ENCODE measurements at regions of chr4 and their contacts with region 1.

Region 1: GRCh38 chr4:185425647-185426352 is at the start of gene UFSP2:
- DNase-seq: peak; percentile 89
- H3K4me3 ChIP-seq: peak within 1 kb of the TSS; percentile 63 to 88 (median 77)
- H3K27ac ChIP-seq: peak within 1 kb of the TSS; percentile 100
- H3K4me1 ChIP-seq: no peaks in the 10 kb centered on the region
- H3K27me3 ChIP-seq: no peaks in the 10 kb centered on the region
- CTCF ChIP-seq: no peak
- total RNA-seq, gene UFSP2: 24.7 to 30.0 TPM

Region 2: DNA sequence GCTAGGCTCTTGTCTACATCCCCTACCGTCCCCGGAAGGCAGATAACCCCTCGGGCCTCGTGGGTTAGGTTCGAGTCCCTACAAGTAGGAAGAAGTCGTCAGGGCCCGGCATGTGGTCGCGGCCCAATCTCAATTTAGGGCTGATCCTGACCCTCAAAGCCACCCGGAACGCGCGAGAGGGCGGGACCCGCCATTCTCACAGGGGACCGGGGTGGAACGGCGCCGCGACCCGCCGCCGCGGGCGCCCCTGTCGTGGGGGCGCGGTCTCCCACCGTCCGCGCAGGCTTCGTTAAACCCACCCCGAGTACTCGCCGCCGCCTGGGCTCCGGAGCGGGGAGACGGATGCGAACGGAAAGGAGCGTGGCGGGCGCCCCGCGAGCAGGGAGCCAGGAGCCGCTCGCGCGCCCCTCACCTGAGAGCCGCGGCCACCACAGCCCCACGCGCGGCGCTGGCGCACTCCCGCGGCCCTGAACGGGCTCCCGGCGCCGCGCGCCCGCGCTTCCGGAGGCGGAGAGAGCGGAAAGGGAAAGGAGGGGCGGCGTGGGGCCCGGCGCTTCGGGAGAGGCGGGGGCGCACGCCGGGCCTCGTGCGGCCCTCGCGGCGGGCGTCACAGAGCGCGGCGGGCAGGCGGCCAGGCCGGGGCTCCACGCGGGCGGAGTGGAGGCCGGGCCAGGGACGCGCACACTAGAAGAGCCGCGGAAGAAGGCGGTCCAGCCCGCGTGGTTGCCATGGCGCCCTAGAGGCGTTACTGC is 222.1 kb before region 1 on chr4 and contains the start of gene CFAP97:
- CTCF ChIA-PET with region 1: no interaction called
- dilution Hi-C with region 1: no loop called
- in situ Hi-C with region 1: no loop called
- intact Hi-C with region 1: loop called (anchors 10 kb)
- DNase-seq: peak; percentile 77
- H3K4me3 ChIP-seq: peak within 1 kb of the TSS; percentile 68 to 92 (median 79)
- H3K27ac ChIP-seq: peak within 1 kb of the TSS; percentile 85
- H3K4me1 ChIP-seq: peaks cover 13% of the 10 kb centered on the region
- H3K27me3 ChIP-seq: no peaks in the 10 kb centered on the region
- CTCF ChIP-seq: no peak
- total RNA-seq, gene CFAP97: 39.7 to 45.2 TPM

Region 3: GRCh38 chr4:185471235-185472102 is 45.7 kb after region 1 on chr4 and contains the start of gene CCDC110:
- CTCF ChIA-PET with region 1: no interaction called
- dilution Hi-C with region 1: no loop called
- in situ Hi-C with region 1: no loop called
- intact Hi-C with region 1: loop called (anchors 2 kb)
- DNase-seq: peak; percentile 81
- H3K4me3 ChIP-seq: peak within 1 kb of the TSS; percentile 71 to 86 (median 82)
- H3K27ac ChIP-seq: no peak within 1 kb of the TSS
- H3K4me1 ChIP-seq: peaks cover 10% of the 10 kb centered on the region
- H3K27me3 ChIP-seq: peaks cover 5% of the 10 kb centered on the region
- CTCF ChIP-seq: peak in 1 of 2 donors; percentile 46
- total RNA-seq, gene CCDC110: 0.17 to 0.59 TPM

Region 4: DNA sequence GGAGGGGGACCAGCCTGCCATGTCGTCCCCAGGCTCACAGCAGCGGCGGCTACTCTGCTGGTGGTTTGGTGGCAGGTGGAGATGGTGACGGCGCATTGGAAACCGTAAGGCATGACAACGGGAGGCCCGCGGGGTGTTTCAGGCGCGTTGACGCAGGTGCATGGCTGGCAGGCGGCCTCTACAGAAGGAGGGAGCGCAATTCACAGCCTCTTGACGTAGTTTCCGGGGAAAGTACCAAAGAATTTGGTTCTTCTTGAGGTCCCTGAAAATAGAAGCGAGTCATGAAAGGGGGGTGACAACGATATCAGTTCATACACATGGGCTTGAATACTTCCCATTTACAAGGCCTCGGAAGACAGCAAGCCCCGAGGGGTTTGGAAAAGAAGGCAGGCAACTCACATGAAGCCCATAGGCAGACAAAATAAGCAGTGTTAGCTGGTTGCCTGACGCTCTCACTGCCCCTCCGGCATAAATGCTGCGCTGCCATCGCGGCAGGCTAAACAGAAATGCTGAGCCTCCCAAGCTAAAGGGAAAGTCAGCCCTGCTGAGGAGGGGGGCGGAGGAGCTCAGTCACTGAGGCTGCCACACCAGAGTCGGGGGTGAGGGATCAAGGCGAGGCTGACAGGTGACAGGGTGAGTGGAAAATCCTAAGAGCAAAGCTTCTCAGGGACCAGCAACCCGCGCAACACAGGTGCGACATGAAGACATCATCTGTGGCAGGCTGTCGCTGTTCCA is 161.8 kb after region 1 on chr4:
- CTCF ChIA-PET with region 1: no interaction called
- dilution Hi-C with region 1: no loop called
- in situ Hi-C with region 1: no loop called
- intact Hi-C with region 1: loop called (anchors 2 kb)
- DNase-seq: no peak
- H3K4me3 ChIP-seq: no peak overlapping the region
- H3K27ac ChIP-seq: no peak overlapping the region
- H3K4me1 ChIP-seq: peaks cover 10% of the 10 kb centered on the region
- H3K27me3 ChIP-seq: no peaks in the 10 kb centered on the region
- CTCF ChIP-seq: no peak

Region 5: DNA sequence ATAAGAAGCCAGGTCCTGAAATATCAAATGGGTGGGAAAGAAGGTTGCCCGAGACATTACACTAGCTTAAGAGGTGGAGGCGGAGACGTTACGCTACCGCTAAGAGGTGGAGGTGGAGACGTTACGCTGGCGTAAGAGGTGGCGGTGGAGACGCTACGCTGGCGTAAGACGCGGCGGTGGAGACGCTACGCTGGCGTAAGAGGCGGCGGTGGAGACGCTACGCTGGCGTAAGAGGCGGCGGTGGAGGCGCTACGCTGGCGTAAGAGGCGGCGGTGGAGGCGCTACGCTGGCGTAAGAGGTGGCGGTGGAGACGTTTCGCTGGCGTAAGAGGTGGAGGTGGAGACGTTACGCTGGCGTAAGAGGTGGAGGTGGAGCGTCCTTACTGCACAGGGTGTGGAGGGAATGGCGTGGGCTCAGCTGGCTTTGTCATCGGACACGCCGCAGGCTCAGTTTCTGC is 778.3 kb after region 1 on chr4:
- CTCF ChIA-PET with region 1: no interaction called
- dilution Hi-C with region 1: no loop called
- in situ Hi-C with region 1: no loop called
- intact Hi-C with region 1: no loop called
- DNase-seq: no peak
- H3K4me3 ChIP-seq: no peak overlapping the region
- H3K27ac ChIP-seq: no peak overlapping the region
- H3K4me1 ChIP-seq: no peaks in the 10 kb centered on the region
- H3K27me3 ChIP-seq: no peaks in the 10 kb centered on the region
- CTCF ChIP-seq: no peak